Psoas muscle (tissue), 8 donors: ENCODE measurements at regions of chr7 and their contacts with region 1.

Region 1: GRCh38 chr7:134632937-134633540 is 13.6 kb upstream of the BPGM start:
- DNase-seq: no peak
- ATAC-seq: peak in 3 of 4 donors; percentile 57 to 81 (median 75)
- H3K4me3 ChIP-seq: no peak overlapping the region
- H3K27ac ChIP-seq: no peak overlapping the region
- H3K4me1 ChIP-seq: no peaks in the 10 kb centered on the region
- H3K27me3 ChIP-seq: peaks cover 0 to 5% (median 0%) of the 10 kb centered on the region in 3 donors
- CTCF ChIP-seq: peak; percentile 63

Region 2: DNA sequence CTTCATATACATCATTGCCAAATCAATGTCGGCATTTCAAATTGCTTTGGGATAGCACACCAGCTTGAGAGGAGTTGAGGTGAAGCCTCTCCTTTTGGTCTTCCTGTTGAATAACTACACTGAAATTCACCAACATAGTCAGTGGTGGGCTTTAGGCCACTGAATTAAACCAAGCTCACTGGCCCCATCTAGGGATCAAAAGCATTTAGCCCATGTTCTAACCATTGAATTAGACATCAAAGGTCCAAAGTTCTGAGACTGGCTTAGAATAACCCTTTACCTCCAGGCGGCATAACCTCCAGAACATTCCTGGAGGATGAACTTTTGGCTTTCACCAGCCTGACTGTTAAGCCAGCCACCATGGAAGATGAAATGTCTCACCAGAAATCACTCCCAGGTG is 68.2 kb after region 1 on chr7:
- intact Hi-C with region 1: loop called (anchors 5 to 10 kb)
- DNase-seq: no peak
- ATAC-seq: peak in 2 of 4 donors; percentile 56 to 66
- H3K4me3 ChIP-seq: no peak overlapping the region
- H3K27ac ChIP-seq: no peak overlapping the region
- H3K4me1 ChIP-seq: no peaks in the 10 kb centered on the region
- H3K27me3 ChIP-seq: no peaks in the 10 kb centered on the region
- CTCF ChIP-seq: peak; percentile 37

Region 3: GRCh38 chr7:134747326-134747725 is 114.3 kb after region 1 on chr7:
- intact Hi-C with region 1: loop called in 1 of 2 experiments (anchors 5 kb)
- DNase-seq: no peak
- ATAC-seq: no peak
- H3K4me3 ChIP-seq: no peak overlapping the region
- H3K27ac ChIP-seq: no peak overlapping the region
- H3K4me1 ChIP-seq: no peaks in the 10 kb centered on the region
- H3K27me3 ChIP-seq: no peaks in the 10 kb centered on the region
- CTCF ChIP-seq: no peak

Region 4: DNA sequence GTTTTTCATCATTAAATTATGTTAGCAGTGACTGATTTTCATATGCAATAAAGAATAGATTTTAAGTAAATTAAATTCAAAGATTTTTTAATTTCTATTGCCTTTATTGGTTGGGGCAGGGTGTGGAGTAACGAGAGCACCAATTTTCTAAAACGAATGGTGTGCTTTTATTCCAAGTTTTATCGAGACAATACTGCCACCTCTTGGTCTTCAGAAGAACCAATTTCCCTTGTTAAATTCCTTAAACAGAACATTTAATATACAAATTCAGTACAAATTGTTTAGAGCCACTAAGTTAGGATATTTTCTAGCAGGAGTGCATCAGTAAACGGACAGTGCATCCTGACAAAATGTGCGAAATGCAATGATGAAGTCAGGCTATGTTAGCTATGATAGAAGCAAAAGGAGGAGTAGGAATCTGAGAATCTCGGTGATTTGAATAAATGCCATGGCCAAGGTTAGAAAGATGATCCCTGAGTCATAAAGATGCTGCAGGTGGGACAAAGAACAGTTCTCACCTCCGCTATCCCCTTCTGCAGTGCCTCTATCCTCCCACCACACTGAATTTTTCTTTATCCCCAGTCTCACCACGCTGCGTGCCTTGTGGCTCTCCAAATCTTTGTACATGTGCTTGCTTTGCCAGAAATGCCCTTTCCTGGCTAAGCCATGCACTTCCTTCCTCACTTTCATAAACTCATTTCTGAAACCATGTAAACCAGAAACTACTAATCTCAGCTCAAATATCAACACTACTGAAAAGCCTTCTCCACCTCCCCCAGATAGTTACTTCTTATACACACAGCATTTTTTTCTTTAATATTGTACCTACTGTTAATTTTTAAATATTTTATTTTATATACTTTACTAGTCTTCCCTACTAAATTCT is 321.4 kb after region 1 on chr7:
- intact Hi-C with region 1: loop called (anchors 2 to 5 kb)
- DNase-seq: no peak
- ATAC-seq: peak in 2 of 4 donors; percentile 44 to 60
- H3K4me3 ChIP-seq: no peak overlapping the region
- H3K27ac ChIP-seq: no peak overlapping the region
- H3K4me1 ChIP-seq: no peaks in the 10 kb centered on the region
- H3K27me3 ChIP-seq: no peaks in the 10 kb centered on the region
- CTCF ChIP-seq: peak; percentile 53